ENCODE measurements at regions of chr16 and their contacts with region 1.

Region 1: DNA sequence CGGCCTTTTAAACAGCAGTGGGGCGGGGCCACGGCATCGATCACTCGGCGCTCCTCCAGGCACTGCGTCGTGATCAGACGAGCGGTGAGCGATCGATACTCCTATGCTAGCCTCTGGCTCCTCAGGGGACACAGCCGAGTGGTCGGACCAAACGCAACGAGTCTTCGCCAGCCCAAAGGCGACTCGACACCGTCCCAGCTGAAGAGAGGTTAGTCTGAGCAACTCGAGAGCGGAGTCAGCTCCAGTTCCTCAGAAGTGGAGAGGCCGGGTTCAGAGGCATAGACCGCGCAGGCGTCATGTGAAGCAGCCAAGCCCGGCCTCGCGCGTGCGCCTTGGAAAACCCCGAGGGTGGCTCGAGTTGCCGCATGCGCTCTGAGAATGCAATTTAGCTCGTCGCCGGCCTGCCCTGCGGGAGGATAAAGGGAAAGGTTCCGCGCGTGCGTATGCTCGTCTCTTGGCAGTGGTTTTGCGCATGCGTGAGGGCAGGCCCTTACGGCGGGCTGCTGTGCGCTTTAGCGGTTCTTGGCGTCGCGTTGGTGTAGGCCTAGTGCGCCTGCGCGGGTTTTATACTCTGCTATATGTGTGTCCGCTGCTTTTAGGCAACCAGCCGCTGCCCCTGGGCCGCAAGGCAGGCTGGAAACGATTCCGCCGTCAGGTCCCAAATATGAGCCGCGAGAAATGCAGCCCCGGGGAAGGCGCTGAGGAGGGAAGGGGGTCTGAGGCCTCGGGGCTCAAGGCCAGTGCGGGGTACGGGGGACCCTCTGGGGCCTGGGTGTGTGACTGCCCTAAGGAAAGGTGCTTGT is at the start of gene KDM8:
- DNase-seq: peak; percentile 98 to 100 (median 100)
- ATAC-seq: peak; percentile 86
- H3K4me3 ChIP-seq: peak within 1 kb of the TSS; percentile 95
- H3K4me3 Mint-ChIP-seq: peak within 1 kb of the TSS; percentile 97
- H3K27ac ChIP-seq: peak within 1 kb of the TSS; percentile 93 to 97
- H3K27ac Mint-ChIP-seq: peak within 1 kb of the TSS; percentile 96
- H3K4me1 ChIP-seq: peaks cover 49% of the 10 kb centered on the region
- H3K4me1 Mint-ChIP-seq: peaks cover 60% of the 10 kb centered on the region
- H3K27me3 ChIP-seq: no peaks in the 10 kb centered on the region
- H3K27me3 Mint-ChIP-seq: no peaks in the 10 kb centered on the region
- CTCF ChIP-seq: no peak
- total RNA-seq, gene KDM8: 15.1 to 17.3 TPM

Region 2: DNA sequence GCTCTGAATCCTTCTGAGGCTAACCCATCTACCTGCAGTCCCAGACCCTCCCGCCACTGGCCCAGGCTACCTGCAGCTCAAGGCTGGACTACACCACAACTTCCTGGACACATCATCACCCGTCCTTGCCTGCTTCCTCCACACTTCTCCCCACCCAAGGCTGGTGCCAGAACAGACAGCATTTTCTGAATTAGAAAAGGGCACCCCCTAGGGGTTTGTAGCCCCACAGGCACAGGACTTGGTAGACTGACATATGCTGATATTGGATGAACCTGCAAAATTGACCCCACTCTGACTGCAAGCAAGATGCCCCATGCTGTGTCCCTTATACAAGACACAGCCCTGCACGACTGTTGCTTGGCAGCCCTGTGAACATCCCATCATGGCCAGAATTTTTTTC is 408.4 kb before region 1 on chr16:
- CTCF ChIA-PET with region 1: no interaction called
- POLR2A ChIA-PET with region 1: no interaction called
- intact Hi-C with region 1: no loop called
- DNase-seq: peak in 1 of 14 experiments; percentile 1
- ATAC-seq: no peak
- H3K4me3 ChIP-seq: no peak overlapping the region
- H3K4me3 Mint-ChIP-seq: no peak overlapping the region
- H3K27ac ChIP-seq: no peak overlapping the region
- H3K27ac Mint-ChIP-seq: no peak overlapping the region
- H3K4me1 ChIP-seq: no peaks in the 10 kb centered on the region
- H3K4me1 Mint-ChIP-seq: no peaks in the 10 kb centered on the region
- H3K27me3 ChIP-seq: peaks cover 2 to 6% of the 10 kb centered on the region in 2 experiments
- H3K27me3 Mint-ChIP-seq: peaks cover 50% of the 10 kb centered on the region
- CTCF ChIP-seq: no peak

Region 3: GRCh38 chr16:27169511-27170071 is 34.0 kb before region 1 on chr16:
- CTCF ChIA-PET with region 1: interaction called, 13 read pairs
- POLR2A ChIA-PET with region 1: interaction called, 31 read pairs
- intact Hi-C with region 1: loop called in 1 of 2 experiments (anchors 2 kb)
- DNase-seq: peak; percentile 55 to 94 (median 75)
- ATAC-seq: peak; percentile 84
- H3K4me3 ChIP-seq: peak overlapping the region; percentile 5
- H3K4me3 Mint-ChIP-seq: peak overlapping the region; percentile 2
- H3K27ac ChIP-seq: peak overlapping the region in 1 of 2 donors; percentile 21
- H3K27ac Mint-ChIP-seq: peak overlapping the region; percentile 71
- H3K4me1 ChIP-seq: peaks cover 66% of the 10 kb centered on the region
- H3K4me1 Mint-ChIP-seq: peaks cover 75% of the 10 kb centered on the region
- H3K27me3 ChIP-seq: no peaks in the 10 kb centered on the region
- H3K27me3 Mint-ChIP-seq: no peaks in the 10 kb centered on the region
- CTCF ChIP-seq: no peak

Region 4: DNA sequence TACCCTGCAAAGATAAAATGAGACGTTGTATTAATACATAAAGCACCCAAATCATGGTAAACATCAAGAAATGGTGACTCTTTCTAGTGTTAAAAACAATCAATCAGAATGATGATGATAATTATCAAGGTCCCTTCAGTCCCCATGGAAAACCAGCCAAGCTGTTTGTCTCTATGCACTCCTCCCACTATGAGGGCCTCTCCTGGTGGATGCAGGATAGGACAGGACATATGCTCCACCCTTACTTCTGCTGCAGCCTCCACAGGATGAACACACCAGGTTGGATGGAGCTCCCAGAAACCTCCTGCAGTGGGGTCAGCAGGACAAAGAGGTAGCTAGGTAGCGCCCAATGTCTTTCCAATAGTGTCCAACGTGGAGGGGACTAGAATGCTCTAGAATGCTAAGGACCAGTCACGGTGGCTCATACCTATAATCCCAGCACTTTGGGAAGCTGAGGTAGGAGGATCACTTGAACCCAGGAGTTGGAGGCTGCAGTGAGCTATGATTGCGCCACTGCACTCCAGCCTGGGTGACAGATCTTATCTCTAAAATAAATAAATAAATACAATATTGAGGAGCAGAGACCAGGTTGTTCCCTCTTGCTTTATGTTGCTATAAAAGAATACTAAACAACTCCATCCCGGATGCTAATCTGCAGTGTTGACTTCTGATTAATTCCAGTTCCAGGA is 10.2 kb before region 1 on chr16:
- CTCF ChIA-PET with region 1: no interaction called
- POLR2A ChIA-PET with region 1: interaction called, 12 read pairs
- intact Hi-C with region 1: no loop called
- DNase-seq: no peak
- ATAC-seq: no peak
- H3K4me3 ChIP-seq: no peak overlapping the region
- H3K4me3 Mint-ChIP-seq: no peak overlapping the region
- H3K27ac ChIP-seq: no peak overlapping the region
- H3K27ac Mint-ChIP-seq: peak overlapping the region; percentile 95
- H3K4me1 ChIP-seq: peaks cover 50% of the 10 kb centered on the region
- H3K4me1 Mint-ChIP-seq: peaks cover 65% of the 10 kb centered on the region
- H3K27me3 ChIP-seq: no peaks in the 10 kb centered on the region
- H3K27me3 Mint-ChIP-seq: no peaks in the 10 kb centered on the region
- CTCF ChIP-seq: no peak

Region 5: DNA sequence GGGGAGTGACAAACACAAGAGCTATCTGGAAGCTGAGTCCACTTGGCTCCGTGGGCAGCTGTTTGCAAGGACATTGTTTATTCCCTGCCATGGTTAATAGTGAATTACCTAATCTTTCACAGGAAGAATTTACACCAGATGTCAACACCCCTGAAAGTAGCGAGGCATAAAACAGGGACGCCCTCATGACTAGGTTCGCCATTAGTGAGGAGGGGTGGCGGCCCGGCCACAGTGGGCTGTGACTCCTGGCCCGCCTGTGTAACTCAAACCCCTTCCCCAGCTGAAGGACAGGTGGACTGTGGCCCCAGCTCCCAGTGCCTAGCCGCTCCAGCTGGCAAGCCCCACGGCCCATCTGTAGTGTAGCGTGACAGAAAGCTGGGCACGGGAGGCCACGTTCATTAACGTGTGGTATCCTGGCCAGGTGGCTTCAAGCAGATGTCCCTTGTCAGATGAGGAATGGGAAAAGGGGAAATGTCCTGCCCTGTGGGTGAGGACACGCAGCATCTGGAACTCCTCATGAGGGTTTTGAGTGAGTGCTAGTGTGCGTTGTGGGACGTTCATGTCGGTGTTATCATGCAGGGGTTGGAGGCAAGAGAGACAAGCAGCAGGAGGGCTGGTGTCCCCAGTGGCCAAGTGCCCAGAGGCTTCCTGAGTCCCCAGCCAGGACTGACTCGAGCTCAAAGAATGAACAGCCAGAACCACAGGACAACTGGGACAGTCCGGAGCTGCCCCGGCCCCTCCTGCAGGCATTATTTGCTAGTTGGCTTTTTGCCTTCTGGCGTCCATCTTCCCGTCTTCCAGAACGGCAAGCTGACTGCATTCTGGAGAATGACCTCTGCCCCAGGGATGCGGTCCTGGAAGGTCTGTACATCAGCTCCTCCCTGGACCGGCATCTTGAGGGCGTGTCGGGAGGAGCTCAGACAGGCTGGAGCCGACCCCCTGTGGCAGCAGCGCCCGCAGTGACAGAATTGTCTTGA is 18.9 kb after region 1 on chr16:
- CTCF ChIA-PET with region 1: no interaction called
- POLR2A ChIA-PET with region 1: interaction called, 14 read pairs
- intact Hi-C with region 1: loop called in 1 of 2 experiments (anchors 2 kb)
- DNase-seq: no peak
- ATAC-seq: no peak
- H3K4me3 ChIP-seq: no peak overlapping the region
- H3K4me3 Mint-ChIP-seq: no peak overlapping the region
- H3K27ac ChIP-seq: no peak overlapping the region
- H3K27ac Mint-ChIP-seq: peak overlapping the region; percentile 61
- H3K4me1 ChIP-seq: peaks cover 20% of the 10 kb centered on the region
- H3K4me1 Mint-ChIP-seq: peaks cover 19% of the 10 kb centered on the region
- H3K27me3 ChIP-seq: no peaks in the 10 kb centered on the region
- H3K27me3 Mint-ChIP-seq: no peaks in the 10 kb centered on the region
- CTCF ChIP-seq: no peak

Region 6: GRCh38 chr16:27268376-27269299 is 65.0 kb after region 1 on chr16 and contains the start of gene NSMCE1:
- CTCF ChIA-PET with region 1: no interaction called
- POLR2A ChIA-PET with region 1: no interaction called
- intact Hi-C with region 1: loop called in 1 of 2 experiments (anchors 2 kb)
- DNase-seq: peak; percentile 91 to 98 (median 96)
- ATAC-seq: peak; percentile 97
- H3K4me3 ChIP-seq: peak within 1 kb of the TSS; percentile 86
- H3K4me3 Mint-ChIP-seq: peak within 1 kb of the TSS; percentile 100
- H3K27ac ChIP-seq: peak within 1 kb of the TSS; percentile 81 to 88
- H3K27ac Mint-ChIP-seq: peak within 1 kb of the TSS; percentile 98
- H3K4me1 ChIP-seq: peaks cover 39% of the 10 kb centered on the region
- H3K4me1 Mint-ChIP-seq: peaks cover 73% of the 10 kb centered on the region
- H3K27me3 ChIP-seq: no peaks in the 10 kb centered on the region
- H3K27me3 Mint-ChIP-seq: no peaks in the 10 kb centered on the region
- CTCF ChIP-seq: no peak
- total RNA-seq, gene NSMCE1: 31.9 to 33.9 TPM

Region 7: GRCh38 chr16:27318392-27319226 is 115.0 kb after region 1 on chr16:
- CTCF ChIA-PET with region 1: no interaction called
- POLR2A ChIA-PET with region 1: interaction called, 13 read pairs
- intact Hi-C with region 1: no loop called
- DNase-seq: peak; percentile 20 to 75 (median 52)
- ATAC-seq: peak; percentile 70
- H3K4me3 ChIP-seq: peak overlapping the region; percentile 91
- H3K4me3 Mint-ChIP-seq: peak overlapping the region; percentile 86
- H3K27ac ChIP-seq: peak overlapping the region; percentile 70 to 94
- H3K27ac Mint-ChIP-seq: peak overlapping the region; percentile 89
- H3K4me1 ChIP-seq: peaks cover 87% of the 10 kb centered on the region
- H3K4me1 Mint-ChIP-seq: peaks cover 86% of the 10 kb centered on the region
- H3K27me3 ChIP-seq: no peaks in the 10 kb centered on the region
- H3K27me3 Mint-ChIP-seq: no peaks in the 10 kb centered on the region
- CTCF ChIP-seq: no peak

Region 8: DNA sequence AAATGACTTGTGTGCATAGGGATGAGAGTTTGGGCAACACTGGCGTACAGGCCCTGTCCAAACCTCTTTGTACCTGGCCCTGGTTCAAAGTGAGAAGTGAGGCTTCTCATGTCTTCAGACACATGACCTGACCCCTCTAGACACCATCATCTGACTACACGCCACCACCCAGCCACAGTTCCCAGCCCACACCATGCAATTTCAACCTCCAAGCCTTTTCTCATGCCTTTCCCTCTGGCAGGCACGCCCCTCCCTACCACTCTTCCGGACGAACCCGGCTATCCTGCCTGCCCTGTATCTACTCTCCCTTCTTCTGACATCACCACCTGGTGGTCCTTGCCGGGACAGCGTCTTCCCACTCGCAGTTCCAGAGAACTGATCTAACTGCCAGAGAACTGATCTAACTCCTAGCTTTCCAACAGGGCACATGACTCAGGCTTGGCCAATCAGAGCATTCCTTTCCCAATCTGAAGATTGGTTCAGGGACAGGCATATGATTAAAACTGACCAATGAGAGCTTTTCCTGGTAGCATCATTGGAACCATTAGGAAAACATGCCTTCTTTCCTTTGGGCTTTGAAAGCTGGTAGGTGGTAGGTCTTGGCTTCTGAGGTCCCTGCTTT is 171.3 kb after region 1 on chr16:
- CTCF ChIA-PET with region 1: no interaction called
- POLR2A ChIA-PET with region 1: interaction called, 10 read pairs
- intact Hi-C with region 1: no loop called
- DNase-seq: peak in 9 of 14 experiments; percentile 23 to 71 (median 42)
- ATAC-seq: peak; percentile 52
- H3K4me3 ChIP-seq: no peak overlapping the region
- H3K4me3 Mint-ChIP-seq: no peak overlapping the region
- H3K27ac ChIP-seq: no peak overlapping the region
- H3K27ac Mint-ChIP-seq: no peak overlapping the region
- H3K4me1 ChIP-seq: peaks cover 76% of the 10 kb centered on the region
- H3K4me1 Mint-ChIP-seq: peaks cover 39% of the 10 kb centered on the region
- H3K27me3 ChIP-seq: no peaks in the 10 kb centered on the region
- H3K27me3 Mint-ChIP-seq: no peaks in the 10 kb centered on the region
- CTCF ChIP-seq: peak; percentile 29